ENCODE measurements at regions of chr5 and their contacts with region 1.

Region 1: GRCh38 chr5:144484124-144484897 is 313.6 kb downstream of the KCTD16 start:
- DNase-seq: no peak
- H3K4me3 ChIP-seq: no peak overlapping the region
- H3K27ac ChIP-seq: no peak overlapping the region
- H3K4me1 ChIP-seq: peaks cover 0 to 14% (median 10%) of the 10 kb centered on the region in 4 experiments; a peak in 5 of 7 replicates
- H3K27me3 ChIP-seq: no peaks in the 10 kb centered on the region
- CTCF ChIP-seq: no peak
- EP300 ChIP-seq: no peak
- POLR2A ChIP-seq: no peak
- RAD21 ChIP-seq: no peak

Region 2: GRCh38 chr5:144467792-144468191 is 16.5 kb before region 1 on chr5:
- CTCF ChIA-PET with region 1: interaction called, 19 read pairs
- POLR2A ChIA-PET with region 1: no interaction called
- DNase-seq: peak in 1 of 2 experiments; percentile 56
- H3K4me3 ChIP-seq: no peak overlapping the region
- H3K27ac ChIP-seq: no peak overlapping the region
- H3K4me1 ChIP-seq: peaks cover 0 to 3% (median 0%) of the 10 kb centered on the region in 4 experiments; a peak in 1 of 7 replicates
- H3K27me3 ChIP-seq: no peaks in the 10 kb centered on the region
- CTCF ChIP-seq: peak in 2 of 3 experiments; percentile 61 to 79; a peak in 3 of 4 replicates
- EP300 ChIP-seq: no peak
- POLR2A ChIP-seq: no peak
- RAD21 ChIP-seq: peak; percentile 69 to 79

Region 3: GRCh38 chr5:144473650-144474049 is 10.7 kb before region 1 on chr5:
- CTCF ChIA-PET with region 1: interaction called, 19 read pairs
- POLR2A ChIA-PET with region 1: no interaction called
- DNase-seq: no peak
- H3K4me3 ChIP-seq: no peak overlapping the region
- H3K27ac ChIP-seq: no peak overlapping the region
- H3K4me1 ChIP-seq: no peaks in the 10 kb centered on the region
- H3K27me3 ChIP-seq: no peaks in the 10 kb centered on the region
- CTCF ChIP-seq: no peak
- EP300 ChIP-seq: no peak
- POLR2A ChIP-seq: no peak
- RAD21 ChIP-seq: no peak

Region 4: GRCh38 chr5:144510845-144511579 is 26.7 kb after region 1 on chr5:
- CTCF ChIA-PET with region 1: no interaction called
- POLR2A ChIA-PET with region 1: no interaction called
- DNase-seq: no peak
- H3K4me3 ChIP-seq: no peak overlapping the region
- H3K27ac ChIP-seq: no peak overlapping the region
- H3K4me1 ChIP-seq: peaks cover 0 to 5% (median 0%) of the 10 kb centered on the region in 4 experiments; a peak in 1 of 7 replicates
- H3K27me3 ChIP-seq: peaks cover 0 to 1% (median 0%) of the 10 kb centered on the region in 4 experiments; a peak in 3 of 7 replicates
- CTCF ChIP-seq: no peak
- EP300 ChIP-seq: no peak
- POLR2A ChIP-seq: no peak
- RAD21 ChIP-seq: no peak

Region 5: GRCh38 chr5:145237843-145238242 is 753.5 kb after region 1 on chr5:
- CTCF ChIA-PET with region 1: interaction called, 23 read pairs
- POLR2A ChIA-PET with region 1: no interaction called
- DNase-seq: peak; percentile 46 to 68
- H3K4me3 ChIP-seq: no peak overlapping the region
- H3K27ac ChIP-seq: no peak overlapping the region
- H3K4me1 ChIP-seq: peaks cover 0 to 10% (median 0%) of the 10 kb centered on the region in 4 experiments; a peak in 2 of 7 replicates
- H3K27me3 ChIP-seq: no peaks in the 10 kb centered on the region
- CTCF ChIP-seq: peak in 2 of 3 experiments; percentile 69 to 81; a peak in 3 of 4 replicates
- EP300 ChIP-seq: no peak
- POLR2A ChIP-seq: no peak
- RAD21 ChIP-seq: peak; percentile 94 to 96